Left cardiac atrium (tissue), 4 donors: ENCODE measurements at regions of chr22 and their contacts with region 1.

Region 1: GRCh38 chr22:23204541-23205157 is 24.3 kb downstream of the BCR start:
- DNase-seq: peak; percentile 84
- ATAC-seq: peak; percentile 92 to 96

Region 2: DNA sequence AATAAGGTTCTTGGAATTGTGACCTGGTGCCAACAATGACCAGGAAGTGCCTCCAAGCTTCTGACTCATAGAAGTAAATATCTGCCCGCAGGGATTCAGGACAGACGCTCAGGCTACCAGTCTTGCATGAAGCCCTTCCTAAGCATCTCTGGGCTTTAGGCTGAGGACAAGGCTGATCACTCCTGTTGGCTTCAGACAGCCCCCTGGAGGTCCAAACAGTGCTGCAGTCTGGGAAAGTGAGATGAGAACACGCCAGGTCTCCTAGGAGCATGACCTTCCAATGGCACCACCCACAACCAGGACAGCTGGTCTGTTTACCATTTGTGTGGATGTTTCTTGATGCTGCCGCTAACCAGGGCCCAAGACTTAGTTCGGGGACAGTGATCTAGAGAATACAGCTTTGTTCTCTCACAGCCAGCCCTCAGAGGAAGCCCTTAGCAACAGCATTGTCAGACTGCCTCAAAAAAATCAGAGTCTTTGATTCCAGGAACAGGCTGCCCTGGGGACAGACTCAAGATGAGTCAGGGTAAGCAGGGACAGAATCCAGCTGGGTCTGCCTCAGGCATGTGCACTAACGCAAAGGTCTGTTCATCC is 807.3 kb before region 1 on chr22:
- intact Hi-C with region 1: no loop called
- DNase-seq: peak; percentile 41
- ATAC-seq: peak in 1 of 2 donors; percentile 92

Region 3: DNA sequence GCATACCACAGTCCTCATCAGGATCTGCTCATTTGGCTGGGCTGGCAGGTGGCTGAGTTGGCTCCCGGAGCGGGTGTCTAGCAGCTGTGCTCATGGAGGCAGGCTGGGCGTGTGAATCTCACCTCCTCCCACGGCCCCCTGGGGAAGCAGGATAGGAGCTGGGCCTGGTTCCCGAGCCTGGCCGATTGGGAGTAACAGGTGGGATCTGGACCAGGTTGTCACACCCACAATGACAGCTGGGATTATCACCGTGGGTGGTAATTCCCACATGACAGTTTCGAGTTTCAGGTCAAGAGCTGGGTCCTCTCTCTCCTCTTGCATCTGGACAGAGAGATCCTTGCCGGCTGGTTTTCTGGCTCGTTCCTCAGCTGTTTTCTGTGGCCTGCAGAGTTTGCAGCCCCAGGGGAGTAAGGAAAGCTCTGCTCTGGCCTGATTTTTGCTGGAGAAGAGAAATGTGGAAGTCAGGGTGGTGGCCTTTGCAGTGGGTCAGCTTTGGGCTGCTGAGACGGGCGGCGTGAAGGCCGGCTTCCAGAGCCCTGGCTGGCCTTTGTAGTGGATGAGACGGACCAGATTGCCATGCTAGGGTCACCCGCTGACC is 32.7 kb after region 1 on chr22:
- intact Hi-C with region 1: loop called in 1 of 2 experiments (anchors 1 kb)
- DNase-seq: peak; percentile 79
- ATAC-seq: peak; percentile 76 to 84